Activated CD4-positive, alpha-beta memory T cell treated with anti-CD3 and anti-CD28 coated beads, Interleukin-2, amount 10 ng/mL, durations not matched to agents 7 days and 5 days (primary cell): ENCODE measurements at regions of chr12 and their contacts with region 1.

Region 1: GRCh38 chr12:56224102-56224701 is at the start of gene NABP2:
- DNase-seq: peak; percentile 95
- H3K4me3 Mint-ChIP-seq: peak within 1 kb of the TSS; percentile 89
- H3K27ac Mint-ChIP-seq: peak within 1 kb of the TSS; percentile 76
- H3K4me1 Mint-ChIP-seq: peaks cover 53% of the 10 kb centered on the region
- H3K27me3 Mint-ChIP-seq: no peaks in the 10 kb centered on the region
- total RNA-seq, gene NABP2: 49.6 to 52.3 TPM

Region 2: GRCh38 chr12:55899082-55899481 is 325.1 kb before region 1 on chr12:
- CTCF ChIA-PET with region 1: no interaction called
- POLR2A ChIA-PET with region 1: no interaction called
- DNase-seq: no peak
- H3K4me3 Mint-ChIP-seq: no peak overlapping the region
- H3K27ac Mint-ChIP-seq: peak overlapping the region; percentile 26
- H3K4me1 Mint-ChIP-seq: peaks cover 2% of the 10 kb centered on the region
- H3K27me3 Mint-ChIP-seq: no peaks in the 10 kb centered on the region

Region 3: GRCh38 chr12:56127888-56128669 is 96.1 kb before region 1 on chr12 and contains the start of gene ESYT1:
- CTCF ChIA-PET with region 1: interaction called, 12 read pairs
- POLR2A ChIA-PET with region 1: interaction called, 21 read pairs
- DNase-seq: peak; percentile 99
- H3K4me3 Mint-ChIP-seq: peak within 1 kb of the TSS; percentile 97
- H3K27ac Mint-ChIP-seq: peak within 1 kb of the TSS; percentile 94
- H3K4me1 Mint-ChIP-seq: peaks cover 75% of the 10 kb centered on the region
- H3K27me3 Mint-ChIP-seq: no peaks in the 10 kb centered on the region
- total RNA-seq, gene ESYT1: 266 to 279 TPM

Region 4: DNA sequence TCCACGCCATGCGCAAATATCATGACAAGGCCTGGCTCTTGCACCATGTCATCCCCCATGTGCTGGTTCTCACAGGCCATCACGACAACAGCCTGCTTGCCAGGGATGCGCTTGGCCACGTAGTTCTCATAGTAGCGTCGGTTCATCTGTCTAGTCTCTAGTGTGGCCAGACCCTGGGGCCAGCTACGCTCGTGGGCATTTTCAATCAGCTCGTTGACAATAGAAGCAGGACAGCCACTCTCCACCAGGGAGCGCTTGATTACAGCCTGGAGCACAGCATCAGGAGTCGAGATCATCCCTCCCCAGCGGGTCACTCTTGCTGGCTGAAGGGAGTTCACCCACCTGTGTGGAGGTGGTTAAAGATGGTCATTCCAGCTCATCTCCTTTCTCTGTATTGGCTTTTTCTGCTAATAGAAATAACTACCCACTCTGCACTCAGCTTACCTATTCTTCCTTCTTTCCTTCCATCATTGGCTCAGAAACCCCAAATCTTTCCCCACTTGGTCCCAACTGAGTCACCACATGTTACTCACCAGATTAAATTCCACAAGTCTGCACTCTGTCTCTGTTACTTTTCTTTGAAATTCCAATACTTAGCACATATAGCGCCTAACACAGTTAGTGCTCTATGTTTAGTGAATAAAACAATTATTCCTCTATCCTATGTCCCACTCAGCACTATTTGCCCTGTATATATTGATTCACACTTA is 17.6 kb before region 1 on chr12:
- CTCF ChIA-PET with region 1: interaction called, 43 read pairs
- POLR2A ChIA-PET with region 1: interaction called, 32 read pairs
- DNase-seq: peak; percentile 52
- H3K4me3 Mint-ChIP-seq: no peak overlapping the region
- H3K27ac Mint-ChIP-seq: no peak overlapping the region
- H3K4me1 Mint-ChIP-seq: no peaks in the 10 kb centered on the region
- H3K27me3 Mint-ChIP-seq: no peaks in the 10 kb centered on the region

Region 5: GRCh38 chr12:56258057-56258819 is 34.0 kb after region 1 on chr12 and contains the start of gene ANKRD52:
- CTCF ChIA-PET with region 1: interaction called, 12 read pairs
- POLR2A ChIA-PET with region 1: interaction called, 14 read pairs
- DNase-seq: peak; percentile 80
- H3K4me3 Mint-ChIP-seq: peak within 1 kb of the TSS; percentile 91
- H3K27ac Mint-ChIP-seq: peak within 1 kb of the TSS; percentile 76
- H3K4me1 Mint-ChIP-seq: peaks cover 22% of the 10 kb centered on the region
- H3K27me3 Mint-ChIP-seq: no peaks in the 10 kb centered on the region
- total RNA-seq, gene ANKRD52: 46.4 to 50.1 TPM

Region 6: DNA sequence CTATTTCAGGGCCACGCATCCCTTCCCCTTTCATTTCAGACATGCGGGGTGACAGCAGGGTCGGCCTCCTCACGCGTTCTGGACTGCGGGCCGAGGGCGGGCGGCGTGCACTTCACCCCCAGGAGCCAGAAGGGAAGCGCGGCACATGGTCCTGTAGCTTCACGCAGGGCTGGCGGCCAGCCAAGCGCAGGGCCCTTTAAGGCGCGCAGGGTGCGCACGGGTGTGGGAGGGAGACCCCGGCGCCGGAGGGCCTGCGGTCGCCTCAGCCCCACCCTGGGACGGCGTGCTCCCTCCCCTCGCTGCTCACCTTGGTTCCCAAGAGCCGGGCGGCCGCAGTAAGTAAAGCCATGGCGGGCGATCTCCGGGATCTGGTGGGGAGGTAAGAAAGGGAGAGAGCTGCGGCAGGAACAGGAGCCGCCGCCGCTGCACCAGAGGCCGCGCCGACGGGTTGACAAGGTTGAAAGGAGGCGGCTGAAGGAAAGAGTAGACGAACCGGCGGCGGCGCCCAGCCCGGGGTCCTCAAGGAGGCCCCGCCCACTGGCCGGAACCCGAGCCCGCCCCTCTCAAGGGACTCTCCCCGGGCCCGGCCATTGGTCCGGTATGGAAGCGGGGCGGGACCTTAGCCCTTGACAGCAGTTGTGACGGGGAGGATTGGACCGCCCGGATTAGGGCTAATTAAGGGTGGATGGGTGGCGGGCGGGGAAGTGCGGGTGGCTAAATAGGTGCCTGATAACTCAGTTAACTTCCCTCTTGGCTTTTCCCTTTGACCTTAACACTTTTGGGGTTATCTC is 75.8 kb after region 1 on chr12 and contains the start of gene CS:
- CTCF ChIA-PET with region 1: interaction called, 3 read pairs
- POLR2A ChIA-PET with region 1: interaction called, 15 read pairs
- DNase-seq: peak; percentile 99
- H3K4me3 Mint-ChIP-seq: peak within 1 kb of the TSS; percentile 95
- H3K27ac Mint-ChIP-seq: peak within 1 kb of the TSS; percentile 84
- H3K4me1 Mint-ChIP-seq: peaks cover 50% of the 10 kb centered on the region
- H3K27me3 Mint-ChIP-seq: no peaks in the 10 kb centered on the region
- total RNA-seq, gene CS: 188 to 193 TPM

Region 7: GRCh38 chr12:56448860-56449621 is 224.8 kb after region 1 on chr12 and contains the start of gene TIMELESS:
- CTCF ChIA-PET with region 1: interaction called, 3 read pairs
- POLR2A ChIA-PET with region 1: interaction called, 13 read pairs
- DNase-seq: peak; percentile 87
- H3K4me3 Mint-ChIP-seq: peak within 1 kb of the TSS; percentile 89
- H3K27ac Mint-ChIP-seq: peak within 1 kb of the TSS; percentile 81
- H3K4me1 Mint-ChIP-seq: peaks cover 36% of the 10 kb centered on the region
- H3K27me3 Mint-ChIP-seq: peaks cover 4% of the 10 kb centered on the region
- total RNA-seq, gene TIMELESS: 44.1 to 45.6 TPM